ENCODE measurements at regions of chr1 and their contacts with region 1.

Region 1: GRCh38 chr1:182910143-182910542 is 42.8 kb downstream of the SHCBP1L start:
- DNase-seq: no peak
- ATAC-seq: no peak
- H3K4me3 ChIP-seq: no peak overlapping the region
- H3K4me3 Mint-ChIP-seq: no peak overlapping the region
- H3K27ac ChIP-seq: no peak overlapping the region
- H3K27ac Mint-ChIP-seq: no peak overlapping the region
- H3K4me1 ChIP-seq: no peaks in the 10 kb centered on the region
- H3K4me1 Mint-ChIP-seq: no peaks in the 10 kb centered on the region
- H3K27me3 ChIP-seq: peaks cover 0 to 5% of the 10 kb centered on the region in 2 experiments
- H3K27me3 Mint-ChIP-seq: peaks cover 11 to 14% of the 10 kb centered on the region in 2 donors

Region 2: DNA sequence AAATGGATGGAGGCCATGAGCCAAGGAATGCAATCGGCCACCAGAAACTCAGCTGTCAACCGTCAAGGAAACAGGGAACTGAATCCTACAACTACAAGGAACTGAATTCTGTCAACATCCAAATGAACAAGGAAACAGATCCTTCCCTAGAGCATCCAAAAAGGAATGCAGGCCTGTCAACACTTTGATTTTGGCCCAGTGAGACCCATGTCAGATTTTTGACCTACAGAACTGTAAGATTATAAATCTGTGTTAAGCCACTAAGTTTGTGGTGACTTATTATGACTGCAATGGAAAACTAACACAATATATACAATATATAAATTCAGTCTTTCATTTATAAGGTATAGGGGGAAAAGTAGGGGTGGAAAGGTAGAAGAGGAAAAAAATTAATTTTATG is 12.4 kb before region 1 on chr1:
- CTCF ChIA-PET with region 1: no interaction called
- POLR2A ChIA-PET with region 1: no interaction called
- DNase-seq: no peak
- ATAC-seq: no peak
- H3K4me3 ChIP-seq: no peak overlapping the region
- H3K4me3 Mint-ChIP-seq: no peak overlapping the region
- H3K27ac ChIP-seq: no peak overlapping the region
- H3K27ac Mint-ChIP-seq: no peak overlapping the region
- H3K4me1 ChIP-seq: no peaks in the 10 kb centered on the region
- H3K4me1 Mint-ChIP-seq: no peaks in the 10 kb centered on the region
- H3K27me3 ChIP-seq: no peaks in the 10 kb centered on the region
- H3K27me3 Mint-ChIP-seq: peaks cover 3 to 5% of the 10 kb centered on the region in 2 donors

Region 3: GRCh38 chr1:182927693-182928433 is 17.7 kb after region 1 on chr1:
- CTCF ChIA-PET with region 1: no interaction called
- POLR2A ChIA-PET with region 1: interaction called in 1 of 2 experiments, 10 read pairs
- DNase-seq: no peak
- ATAC-seq: no peak
- H3K4me3 ChIP-seq: no peak overlapping the region
- H3K4me3 Mint-ChIP-seq: no peak overlapping the region
- H3K27ac ChIP-seq: no peak overlapping the region
- H3K27ac Mint-ChIP-seq: no peak overlapping the region
- H3K4me1 ChIP-seq: no peaks in the 10 kb centered on the region
- H3K4me1 Mint-ChIP-seq: peaks cover 0 to 4% (median 0%) of the 10 kb centered on the region in 3 donors
- H3K27me3 ChIP-seq: no peaks in the 10 kb centered on the region
- H3K27me3 Mint-ChIP-seq: peaks cover 10 to 17% of the 10 kb centered on the region in 2 donors

Region 4: DNA sequence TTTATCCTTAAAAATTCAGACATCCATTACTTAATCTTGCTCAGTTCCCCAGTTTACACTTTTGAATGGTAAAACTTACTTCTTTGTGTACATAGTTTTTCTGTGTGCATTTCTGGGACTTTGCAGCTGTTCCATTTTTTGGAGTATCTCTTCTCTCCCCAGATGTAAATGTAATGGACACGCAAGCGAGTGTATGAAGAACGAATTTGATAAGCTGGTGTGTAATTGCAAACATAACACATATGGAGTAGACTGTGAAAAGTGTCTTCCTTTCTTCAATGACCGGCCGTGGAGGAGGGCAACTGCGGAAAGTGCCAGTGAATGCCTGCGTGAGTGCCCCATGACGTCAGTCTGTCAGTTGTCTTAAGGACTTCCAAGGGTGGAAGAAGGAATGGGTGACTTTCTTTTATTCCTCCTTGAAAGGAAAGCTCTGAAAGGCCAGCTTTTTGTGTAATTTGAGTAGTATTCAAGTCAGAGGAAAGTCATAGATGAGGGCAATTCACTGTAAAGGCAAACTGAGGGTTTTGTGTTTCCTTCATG is 200.3 kb after region 1 on chr1:
- CTCF ChIA-PET with region 1: no interaction called
- POLR2A ChIA-PET with region 1: no interaction called
- DNase-seq: no peak
- ATAC-seq: no peak
- H3K4me3 ChIP-seq: no peak overlapping the region
- H3K4me3 Mint-ChIP-seq: no peak overlapping the region
- H3K27ac ChIP-seq: no peak overlapping the region
- H3K27ac Mint-ChIP-seq: no peak overlapping the region
- H3K4me1 ChIP-seq: no peaks in the 10 kb centered on the region
- H3K4me1 Mint-ChIP-seq: no peaks in the 10 kb centered on the region
- H3K27me3 ChIP-seq: no peaks in the 10 kb centered on the region
- H3K27me3 Mint-ChIP-seq: peaks cover 0 to 14% of the 10 kb centered on the region in 2 donors